Activated CD4-positive, alpha-beta memory T cell treated with anti-CD3 and anti-CD28 coated beads for 36 hours (primary cell): ENCODE measurements at regions of chr11 and their contacts with region 1.

Region 1: GRCh38 chr11:116217006-116217405 is 555.8 kb downstream of the BUD13 start:
- DNase-seq: peak; percentile 26
- H3K4me3 Mint-ChIP-seq: no peak overlapping the region
- H3K27ac Mint-ChIP-seq: no peak overlapping the region
- H3K4me1 Mint-ChIP-seq: no peaks in the 10 kb centered on the region
- H3K27me3 Mint-ChIP-seq: no peaks in the 10 kb centered on the region

Region 2: GRCh38 chr11:116183161-116183781 is 33.7 kb before region 1 on chr11:
- CTCF ChIA-PET with region 1: no interaction called
- POLR2A ChIA-PET with region 1: no interaction called
- intact Hi-C with region 1: no loop called
- DNase-seq: no peak
- H3K4me3 Mint-ChIP-seq: no peak overlapping the region
- H3K27ac Mint-ChIP-seq: no peak overlapping the region
- H3K4me1 Mint-ChIP-seq: no peaks in the 10 kb centered on the region
- H3K27me3 Mint-ChIP-seq: peaks cover 1% of the 10 kb centered on the region

Region 3: GRCh38 chr11:116276051-116277044 is 59.3 kb after region 1 on chr11:
- CTCF ChIA-PET with region 1: no interaction called
- POLR2A ChIA-PET with region 1: no interaction called
- intact Hi-C with region 1: loop called (anchors 1 kb)
- DNase-seq: peak; percentile 85
- H3K4me3 Mint-ChIP-seq: peak overlapping the region; percentile 35
- H3K27ac Mint-ChIP-seq: no peak overlapping the region
- H3K4me1 Mint-ChIP-seq: no peaks in the 10 kb centered on the region
- H3K27me3 Mint-ChIP-seq: no peaks in the 10 kb centered on the region